Left cardiac atrium (tissue), 4 donors: ENCODE measurements at regions of chr4 and their contacts with region 1.

Region 1: GRCh38 chr4:87093443-87094123 is 126.8 kb downstream of the KLHL8 start:
- DNase-seq: no peak
- ATAC-seq: peak; percentile 67 to 75

Region 2: DNA sequence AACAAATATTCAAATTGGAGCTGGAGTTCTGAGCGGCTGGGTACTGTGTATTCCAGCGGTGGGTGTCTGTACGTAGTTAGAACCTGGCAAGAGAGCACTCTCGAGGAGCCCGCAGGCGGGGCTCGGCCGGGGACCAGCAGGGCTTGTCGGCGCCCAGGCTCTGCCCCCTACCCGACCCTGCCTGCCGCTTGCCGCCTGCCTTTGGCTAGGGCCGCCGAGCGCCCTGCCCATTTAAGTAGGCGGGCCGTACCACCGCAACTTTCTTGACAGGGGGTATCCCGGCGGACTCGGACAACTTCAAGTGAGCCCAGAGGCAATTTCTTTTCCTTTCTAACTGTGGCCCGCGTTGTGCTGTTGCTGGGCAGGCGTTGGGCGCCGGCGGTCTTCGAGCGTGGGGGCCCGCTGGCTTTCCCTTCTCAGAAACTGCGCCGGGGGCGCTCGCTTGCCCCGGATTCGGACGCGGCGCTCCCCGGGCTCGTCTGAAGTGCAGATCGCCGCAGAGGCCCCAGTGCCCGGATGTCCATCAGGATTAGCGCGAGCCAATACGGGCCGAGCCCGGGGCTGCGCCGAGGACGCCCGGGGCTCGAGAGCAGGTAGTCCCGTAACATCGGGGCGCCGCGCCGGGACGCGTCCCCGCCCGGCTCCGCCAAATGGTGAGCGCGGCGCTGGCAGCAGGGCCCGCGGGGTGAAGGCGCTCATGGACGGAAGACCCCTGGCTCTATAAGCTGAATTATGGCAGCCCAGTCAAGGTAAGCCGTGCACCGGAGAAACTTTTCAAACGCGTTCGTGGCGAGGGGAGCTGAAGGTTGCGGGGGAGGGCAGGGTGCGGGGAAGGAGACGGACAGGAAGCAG is 86.7 kb before region 1 on chr4:
- intact Hi-C with region 1: loop called (anchors 5 kb)
- DNase-seq: peak; percentile 95
- ATAC-seq: peak; percentile 94 to 96